Left cardiac atrium (tissue), 4 donors: ENCODE measurements at regions of chrX and their contacts with region 1.

Region 1: GRCh38 chrX:84108584-84108983 is 79.4 kb downstream of the RPS6KA6 start:
- DNase-seq: no peak
- ATAC-seq: no peak

Region 2: DNA sequence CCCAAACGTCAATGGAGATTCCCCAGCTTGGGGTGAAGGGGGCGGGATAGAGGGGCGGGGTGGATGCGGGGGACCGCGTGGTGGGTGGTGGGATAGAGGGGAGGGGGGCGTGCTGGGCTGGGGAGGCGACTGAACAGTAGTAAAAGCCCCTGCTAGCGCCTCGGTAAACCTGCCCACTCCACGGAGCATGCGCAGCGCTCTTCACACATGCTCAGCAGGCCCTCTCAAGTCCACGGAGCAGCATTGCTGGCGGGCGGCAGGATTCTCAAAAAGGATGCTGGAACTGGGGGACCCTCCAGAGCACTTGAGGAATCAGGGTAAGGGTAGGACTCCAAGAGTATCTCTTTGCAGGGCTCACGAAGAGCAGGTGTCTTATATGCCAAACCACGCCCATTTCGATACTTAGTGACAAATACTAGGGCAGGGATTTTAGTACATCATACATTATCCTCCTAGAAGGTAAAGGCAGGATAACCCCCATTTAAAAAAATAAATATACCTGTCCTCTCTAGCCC is 79.8 kb after region 1 on chrX:
- intact Hi-C with region 1: loop called in 1 of 2 experiments (anchors 5 kb)
- DNase-seq: peak; percentile 58
- ATAC-seq: peak; percentile 87 to 95

Region 3: DNA sequence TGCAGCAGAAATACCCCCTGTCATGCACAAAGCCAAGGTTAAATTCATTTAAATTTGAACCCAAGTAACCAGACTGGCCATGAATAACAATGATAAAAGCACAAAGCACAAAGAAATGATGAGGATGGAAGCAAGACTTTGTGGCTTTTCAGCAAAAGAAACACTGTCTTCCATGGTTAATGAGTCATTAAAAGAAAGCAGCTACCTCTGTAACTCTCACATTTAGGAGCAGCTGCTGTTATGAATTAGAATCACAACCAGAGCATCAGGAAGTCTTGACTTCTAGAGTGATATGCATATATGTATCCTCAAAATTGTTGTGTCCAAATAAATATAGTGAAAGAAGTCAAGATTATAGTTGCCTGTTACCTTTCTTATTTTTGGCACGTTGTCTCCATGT is 150.1 kb after region 1 on chrX:
- intact Hi-C with region 1: no loop called
- DNase-seq: no peak
- ATAC-seq: no peak